Endothelial cell of umbilical vein (primary cell): ENCODE measurements at regions of chr14 and their contacts with region 1.

Region 1: GRCh38 chr14:30270200-30271161 is 288.5 kb upstream of the G2E3 start:
- DNase-seq: peak; percentile 82
- H3K4me3 ChIP-seq: peak overlapping the region in 1 of 3 experiments; percentile 41
- H3K27ac ChIP-seq: no peak overlapping the region
- H3K4me1 ChIP-seq: peaks cover 12% of the 10 kb centered on the region
- H3K27me3 ChIP-seq: peaks cover 5 to 18% of the 10 kb centered on the region in 2 experiments
- CTCF ChIP-seq: peak; percentile 94 to 95
- POLR2A ChIP-seq: no peak

Region 2: DNA sequence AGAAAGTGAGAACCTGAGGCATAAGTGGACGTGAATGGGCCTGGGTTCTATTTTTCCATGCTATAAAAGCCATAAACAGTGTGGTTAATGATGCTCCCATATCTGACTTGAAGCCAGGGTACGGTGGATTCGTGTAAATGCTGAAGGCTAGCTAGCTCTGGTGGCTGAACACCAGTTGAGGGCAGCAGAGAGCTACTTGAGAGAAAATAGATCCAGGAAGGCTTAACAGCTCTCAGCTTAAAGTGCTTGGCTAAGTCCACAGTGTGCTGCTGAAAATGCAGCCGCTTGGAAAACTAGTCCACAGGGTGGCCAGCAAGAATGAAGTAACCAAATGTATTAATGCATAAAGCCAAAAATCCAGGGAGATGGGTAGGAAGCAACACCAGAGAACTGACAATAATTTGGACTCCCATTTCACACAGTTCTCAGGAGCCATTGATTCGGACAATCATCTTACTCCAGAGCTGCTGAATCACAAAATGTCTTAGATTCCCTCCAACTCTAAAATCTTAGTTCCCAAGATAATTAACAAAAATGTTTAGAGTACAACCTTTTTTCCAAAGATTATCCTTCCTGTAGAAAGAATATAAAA is 1518.9 kb before region 1 on chr14:
- CTCF ChIA-PET with region 1: interaction called, 16 read pairs
- POLR2A ChIA-PET with region 1: no interaction called
- dilution Hi-C with region 1: no loop called
- intact Hi-C with region 1: loop called (anchors 2 kb)
- DNase-seq: peak; percentile 50
- H3K4me3 ChIP-seq: no peak overlapping the region
- H3K27ac ChIP-seq: no peak overlapping the region
- H3K4me1 ChIP-seq: no peaks in the 10 kb centered on the region
- H3K27me3 ChIP-seq: peaks cover 24 to 34% of the 10 kb centered on the region in 2 experiments
- CTCF ChIP-seq: peak; percentile 62 to 71
- POLR2A ChIP-seq: no peak

Region 3: DNA sequence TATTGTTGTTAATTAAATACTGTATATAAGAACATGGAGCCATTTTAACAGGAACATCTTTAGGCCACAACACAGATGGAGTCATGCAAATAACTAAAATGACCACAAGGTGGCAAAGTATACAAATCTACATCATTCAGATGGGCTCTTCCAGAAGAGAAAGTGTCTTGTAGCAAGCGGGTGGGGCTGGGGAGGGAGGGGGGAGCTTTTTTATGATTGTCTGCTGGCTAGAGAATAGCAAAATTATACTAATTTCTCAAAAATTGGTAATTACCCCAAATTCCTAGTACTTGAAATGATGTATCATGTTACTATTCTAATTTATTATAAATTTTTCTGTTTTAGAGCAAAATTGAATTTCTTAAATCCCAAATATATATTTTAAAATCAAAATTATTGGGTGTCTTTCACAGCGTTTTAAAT is 721.5 kb before region 1 on chr14:
- CTCF ChIA-PET with region 1: interaction called, 45 read pairs
- POLR2A ChIA-PET with region 1: no interaction called
- dilution Hi-C with region 1: no loop called
- intact Hi-C with region 1: loop called (anchors 2 kb)
- DNase-seq: peak; percentile 69
- H3K4me3 ChIP-seq: no peak overlapping the region
- H3K27ac ChIP-seq: no peak overlapping the region
- H3K4me1 ChIP-seq: no peaks in the 10 kb centered on the region
- H3K27me3 ChIP-seq: peaks cover 0 to 4% of the 10 kb centered on the region in 2 experiments
- CTCF ChIP-seq: peak; percentile 27 to 41
- POLR2A ChIP-seq: no peak

Region 4: GRCh38 chr14:30005114-30005808 is 265.2 kb before region 1 on chr14:
- CTCF ChIA-PET with region 1: interaction called, 5 read pairs
- POLR2A ChIA-PET with region 1: no interaction called
- dilution Hi-C with region 1: no loop called
- intact Hi-C with region 1: loop called (anchors 5 kb)
- DNase-seq: peak; percentile 53
- H3K4me3 ChIP-seq: no peak overlapping the region
- H3K27ac ChIP-seq: no peak overlapping the region
- H3K4me1 ChIP-seq: no peaks in the 10 kb centered on the region
- H3K27me3 ChIP-seq: peaks cover 0 to 6% of the 10 kb centered on the region in 2 experiments
- CTCF ChIP-seq: peak; percentile 29 to 56
- POLR2A ChIP-seq: no peak

Region 5: DNA sequence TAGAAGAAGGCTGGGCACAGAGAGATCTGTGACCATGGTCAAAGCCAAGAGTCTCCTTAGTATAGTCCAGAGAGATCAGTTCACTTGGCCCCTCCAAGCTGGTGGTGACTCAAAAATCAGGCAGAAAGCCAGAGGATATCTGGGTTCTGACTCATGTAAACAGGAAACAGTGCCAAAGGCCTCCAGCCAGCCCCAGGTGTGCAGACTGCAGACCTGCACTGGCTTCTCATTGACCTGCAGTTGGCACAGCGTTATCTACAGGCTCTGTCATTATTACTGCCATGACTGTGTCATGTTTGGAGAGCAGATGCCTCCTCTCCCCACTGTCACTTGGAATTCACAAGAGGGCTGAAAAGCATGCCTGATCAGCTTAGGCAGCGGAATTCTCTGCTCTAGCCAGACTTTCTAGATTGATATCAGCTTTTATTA is 47.1 kb before region 1 on chr14:
- CTCF ChIA-PET with region 1: interaction called, 74 read pairs
- POLR2A ChIA-PET with region 1: interaction called, 4 read pairs
- dilution Hi-C with region 1: no loop called
- intact Hi-C with region 1: loop called (anchors 1 kb)
- DNase-seq: peak; percentile 97
- H3K4me3 ChIP-seq: no peak overlapping the region
- H3K27ac ChIP-seq: peak overlapping the region; percentile 74
- H3K4me1 ChIP-seq: peaks cover 58% of the 10 kb centered on the region
- H3K27me3 ChIP-seq: no peaks in the 10 kb centered on the region
- CTCF ChIP-seq: no peak
- POLR2A ChIP-seq: no peak

Region 6: DNA sequence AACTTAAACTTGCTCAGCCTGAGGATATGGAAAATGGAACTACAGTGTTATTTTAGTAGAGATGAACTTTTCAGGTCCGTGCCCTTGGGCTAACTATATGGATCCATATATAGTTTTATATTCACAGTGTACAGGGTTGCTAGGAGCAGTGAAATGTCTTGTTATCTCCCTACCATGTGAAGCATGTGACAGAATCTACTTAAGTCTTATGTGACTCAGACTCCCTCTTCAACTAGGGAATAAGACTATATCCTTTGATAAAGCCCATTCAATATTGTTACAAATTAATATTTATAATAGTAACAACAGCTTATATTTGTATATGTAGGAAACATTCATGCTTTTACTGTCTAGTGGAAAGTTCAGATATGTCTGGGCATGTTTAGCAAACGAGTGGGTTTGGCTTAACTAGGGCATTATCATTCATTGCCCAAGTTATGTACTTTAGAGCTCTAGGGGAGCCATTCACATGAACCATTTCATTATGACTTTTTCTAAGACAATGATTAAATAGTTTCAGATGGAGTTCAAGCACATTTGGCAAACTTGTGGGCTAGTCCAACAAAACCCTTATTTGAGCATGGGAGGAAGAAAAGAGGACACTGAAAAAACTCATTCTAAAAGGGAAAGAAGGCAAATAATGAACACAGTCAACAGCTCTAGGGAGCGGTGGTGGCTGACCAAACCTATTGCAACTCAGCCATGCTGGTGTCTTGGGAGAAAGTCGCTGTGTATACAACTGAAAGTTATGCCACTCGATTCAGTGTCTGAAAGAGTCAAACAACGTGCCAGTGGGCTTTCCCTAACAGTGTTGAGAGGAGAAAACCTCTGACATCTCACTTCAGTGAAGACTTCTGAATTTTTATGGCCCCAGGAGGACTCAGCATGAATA is 17.5 kb before region 1 on chr14:
- CTCF ChIA-PET with region 1: interaction called, 68 read pairs
- POLR2A ChIA-PET with region 1: no interaction called
- dilution Hi-C with region 1: no loop called
- intact Hi-C with region 1: no loop called
- DNase-seq: no peak
- H3K4me3 ChIP-seq: no peak overlapping the region
- H3K27ac ChIP-seq: no peak overlapping the region
- H3K4me1 ChIP-seq: no peaks in the 10 kb centered on the region
- H3K27me3 ChIP-seq: peaks cover 0 to 3% of the 10 kb centered on the region in 2 experiments
- CTCF ChIP-seq: no peak
- POLR2A ChIP-seq: no peak